ENCODE measurements at regions of chr1 and their contacts with region 1.

Region 1: GRCh38 chr1:147723691-147724323 is 36.6 kb downstream of the GJA5 start:
- DNase-seq: peak; percentile 72
- H3K4me3 Mint-ChIP-seq: no peak overlapping the region
- H3K27ac Mint-ChIP-seq: no peak overlapping the region
- H3K4me1 Mint-ChIP-seq: peaks cover 16% of the 10 kb centered on the region
- H3K27me3 Mint-ChIP-seq: no peaks in the 10 kb centered on the region
- CTCF ChIP-seq: peak; percentile 51

Region 2: GRCh38 chr1:147527941-147528936 is 195.6 kb before region 1 on chr1:
- CTCF ChIA-PET with region 1: no interaction called
- POLR2A ChIA-PET with region 1: no interaction called
- intact Hi-C with region 1: no loop called
- DNase-seq: no peak
- H3K4me3 Mint-ChIP-seq: no peak overlapping the region
- H3K27ac Mint-ChIP-seq: no peak overlapping the region
- H3K4me1 Mint-ChIP-seq: no peaks in the 10 kb centered on the region
- H3K27me3 Mint-ChIP-seq: peaks cover 43% of the 10 kb centered on the region
- CTCF ChIP-seq: no peak

Region 3: DNA sequence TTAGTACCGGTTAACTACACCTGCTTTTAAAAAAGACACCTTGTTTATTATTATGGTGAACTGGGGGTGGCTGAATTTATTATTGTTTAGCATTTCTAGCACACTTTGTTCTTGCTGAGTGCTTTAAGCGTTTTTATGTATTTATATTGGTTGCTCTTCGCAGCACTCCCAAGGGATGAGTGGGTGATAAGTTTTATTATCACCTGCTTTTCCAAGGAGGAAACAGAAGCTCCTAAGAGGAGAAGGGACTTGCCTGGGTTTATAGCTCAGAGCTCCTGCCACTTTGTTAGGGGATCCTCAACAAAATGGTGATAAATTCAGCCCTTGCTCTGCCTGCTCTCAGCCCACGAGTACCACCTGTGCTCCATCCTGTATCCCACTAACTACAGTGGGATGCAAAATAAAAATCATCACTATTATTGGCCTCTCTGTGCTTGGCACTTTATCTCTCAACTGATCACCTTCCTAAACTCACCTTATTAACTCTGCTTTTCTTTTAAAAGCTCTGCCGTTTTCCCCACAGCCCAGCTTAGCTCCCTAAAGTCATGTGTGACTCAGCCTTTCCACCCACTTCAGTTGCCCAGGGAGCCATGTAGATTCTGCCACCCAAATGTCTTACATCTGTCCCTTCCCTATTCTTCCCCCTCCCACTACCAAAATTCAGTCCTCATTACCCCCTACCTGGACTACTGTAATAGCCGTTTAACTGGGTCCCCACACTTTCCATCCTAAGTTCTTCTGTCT is 138.0 kb before region 1 on chr1:
- CTCF ChIA-PET with region 1: no interaction called
- POLR2A ChIA-PET with region 1: no interaction called
- intact Hi-C with region 1: no loop called
- DNase-seq: no peak
- H3K4me3 Mint-ChIP-seq: no peak overlapping the region
- H3K27ac Mint-ChIP-seq: no peak overlapping the region
- H3K4me1 Mint-ChIP-seq: no peaks in the 10 kb centered on the region
- H3K27me3 Mint-ChIP-seq: peaks cover 58% of the 10 kb centered on the region
- CTCF ChIP-seq: no peak

Region 4: DNA sequence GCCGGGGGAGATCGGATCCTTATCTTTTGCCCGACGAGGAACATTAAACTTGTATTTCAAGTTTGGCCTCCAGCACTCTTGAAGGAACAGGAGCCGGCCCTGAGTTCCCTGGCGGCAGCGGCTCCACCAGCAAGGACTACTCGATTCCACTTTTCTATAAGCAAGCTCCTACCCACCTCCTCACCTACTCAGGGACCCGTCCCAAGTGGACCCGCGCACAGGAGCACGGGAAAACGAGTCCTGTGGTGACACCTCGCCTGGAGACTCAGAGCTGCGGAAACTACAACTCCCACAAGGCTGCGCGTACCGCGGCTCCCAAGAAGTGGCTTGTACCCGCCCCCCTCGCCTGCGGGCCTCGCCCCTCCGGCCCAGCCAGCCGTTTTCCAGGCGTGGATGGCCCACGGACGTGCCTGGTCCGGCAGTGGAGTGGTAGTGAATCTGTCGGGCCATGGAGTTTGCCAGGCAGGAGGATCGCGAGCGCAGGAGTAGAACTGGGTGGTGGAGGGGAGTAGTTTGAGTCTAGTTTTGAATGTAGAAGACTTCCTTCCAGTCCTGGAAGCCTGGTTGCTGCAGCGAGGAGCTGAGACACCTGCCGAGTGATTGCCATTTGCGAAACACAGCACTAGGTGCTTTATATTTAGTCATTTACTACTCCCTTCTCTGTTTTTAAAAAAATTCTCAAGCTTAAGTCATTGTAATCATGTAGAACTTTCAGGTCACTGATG is 53.3 kb before region 1 on chr1 and contains the start of gene ACP6:
- CTCF ChIA-PET with region 1: interaction called, 3 read pairs
- POLR2A ChIA-PET with region 1: interaction called, 20 read pairs
- intact Hi-C with region 1: no loop called
- DNase-seq: peak; percentile 98
- H3K4me3 Mint-ChIP-seq: peak within 1 kb of the TSS; percentile 93
- H3K27ac Mint-ChIP-seq: peak within 1 kb of the TSS; percentile 75
- H3K4me1 Mint-ChIP-seq: peaks cover 18% of the 10 kb centered on the region
- H3K27me3 Mint-ChIP-seq: no peaks in the 10 kb centered on the region
- CTCF ChIP-seq: no peak
- total RNA-seq, gene ACP6: 40.5 and 54.1 TPM in 2 replicates

Region 5: GRCh38 chr1:147700042-147701006 is 23.5 kb before region 1 on chr1:
- CTCF ChIA-PET with region 1: interaction called, 12 read pairs
- POLR2A ChIA-PET with region 1: interaction called, 4 read pairs
- intact Hi-C with region 1: no loop called
- DNase-seq: peak; percentile 81
- H3K4me3 Mint-ChIP-seq: no peak overlapping the region
- H3K27ac Mint-ChIP-seq: no peak overlapping the region
- H3K4me1 Mint-ChIP-seq: peaks cover 7% of the 10 kb centered on the region
- H3K27me3 Mint-ChIP-seq: no peaks in the 10 kb centered on the region
- CTCF ChIP-seq: peak; percentile 96

Region 6: GRCh38 chr1:147757015-147758000 is 33.5 kb after region 1 on chr1:
- CTCF ChIA-PET with region 1: interaction called, 10 read pairs
- POLR2A ChIA-PET with region 1: interaction called, 19 read pairs
- intact Hi-C with region 1: no loop called
- DNase-seq: peak; percentile 95
- H3K4me3 Mint-ChIP-seq: no peak overlapping the region
- H3K27ac Mint-ChIP-seq: peak overlapping the region; percentile 46
- H3K4me1 Mint-ChIP-seq: peaks cover 43% of the 10 kb centered on the region
- H3K27me3 Mint-ChIP-seq: no peaks in the 10 kb centered on the region
- CTCF ChIP-seq: no peak

Region 7: GRCh38 chr1:147897029-147897752 is 173.4 kb after region 1 on chr1:
- CTCF ChIA-PET with region 1: interaction called, 149 read pairs
- POLR2A ChIA-PET with region 1: interaction called, 6 read pairs
- intact Hi-C with region 1: loop called (anchors 1 kb)
- DNase-seq: peak; percentile 86
- H3K4me3 Mint-ChIP-seq: no peak overlapping the region
- H3K27ac Mint-ChIP-seq: peak overlapping the region; percentile 61
- H3K4me1 Mint-ChIP-seq: peaks cover 16% of the 10 kb centered on the region
- H3K27me3 Mint-ChIP-seq: peaks cover 15% of the 10 kb centered on the region
- CTCF ChIP-seq: no peak